ENCODE measurements at regions of chr1 and their contacts with region 1.

Region 1: GRCh38 chr1:193264313-193265065 is 78.1 kb upstream of the B3GALT2 start:
- DNase-seq: no peak
- ATAC-seq: no peak
- H3K4me3 ChIP-seq: no peak overlapping the region
- H3K27ac ChIP-seq: no peak overlapping the region
- H3K4me1 ChIP-seq: no peaks in the 10 kb centered on the region
- H3K27me3 ChIP-seq: no peaks in the 10 kb centered on the region
- CTCF ChIP-seq: no peak

Region 2: DNA sequence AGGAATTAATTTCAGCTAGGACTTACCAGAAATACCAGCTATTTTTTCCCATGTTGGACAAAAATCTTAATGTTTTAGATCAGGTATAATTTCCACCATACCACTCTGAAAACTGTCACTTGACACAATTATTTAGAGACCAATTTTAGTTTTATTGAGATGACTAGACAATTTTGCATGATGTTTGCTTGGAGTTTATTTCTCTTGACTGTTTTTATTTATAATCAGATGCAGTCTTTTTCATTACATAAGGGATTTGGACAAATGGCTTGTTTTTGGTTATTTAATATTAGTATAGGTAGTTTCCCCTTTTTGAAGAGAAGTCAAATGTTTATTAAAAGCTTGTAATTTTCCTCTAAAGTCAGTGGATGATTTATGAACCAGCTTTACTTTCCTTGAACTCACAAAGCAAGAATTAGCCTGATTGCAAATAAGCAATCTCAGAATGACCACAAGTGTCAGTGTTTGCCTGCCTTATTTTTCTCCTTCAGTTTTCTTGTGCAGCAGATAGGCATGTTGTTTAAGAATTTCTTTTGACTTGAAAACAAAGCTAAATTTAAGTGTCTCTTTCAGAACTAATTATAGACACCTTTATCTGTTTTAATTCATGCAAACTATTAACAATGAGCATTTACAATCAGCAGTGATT is 74.3 kb before region 1 on chr1:
- CTCF ChIA-PET with region 1: no interaction called
- POLR2A ChIA-PET with region 1: no interaction called
- in situ Hi-C with region 1: no loop called
- intact Hi-C with region 1: no loop called
- DNase-seq: no peak
- ATAC-seq: no peak
- H3K4me3 ChIP-seq: no peak overlapping the region
- H3K27ac ChIP-seq: no peak overlapping the region
- H3K4me1 ChIP-seq: peaks cover 14% of the 10 kb centered on the region
- H3K27me3 ChIP-seq: no peaks in the 10 kb centered on the region
- CTCF ChIP-seq: no peak; the same call in 1 of the 2 replicates

Region 3: GRCh38 chr1:193211539-193211938 is 53.0 kb before region 1 on chr1:
- CTCF ChIA-PET with region 1: no interaction called
- POLR2A ChIA-PET with region 1: no interaction called
- in situ Hi-C with region 1: no loop called
- intact Hi-C with region 1: no loop called
- DNase-seq: no peak
- ATAC-seq: no peak
- H3K4me3 ChIP-seq: no peak overlapping the region
- H3K27ac ChIP-seq: no peak overlapping the region
- H3K4me1 ChIP-seq: no peaks in the 10 kb centered on the region
- H3K27me3 ChIP-seq: no peaks in the 10 kb centered on the region
- CTCF ChIP-seq: no peak

Region 4: GRCh38 chr1:193283016-193283415 is 18.5 kb after region 1 on chr1:
- CTCF ChIA-PET with region 1: no interaction called
- POLR2A ChIA-PET with region 1: no interaction called
- in situ Hi-C with region 1: no loop called
- intact Hi-C with region 1: no loop called
- DNase-seq: no peak
- ATAC-seq: no peak
- H3K4me3 ChIP-seq: no peak overlapping the region
- H3K27ac ChIP-seq: no peak overlapping the region
- H3K4me1 ChIP-seq: no peaks in the 10 kb centered on the region
- H3K27me3 ChIP-seq: no peaks in the 10 kb centered on the region
- CTCF ChIP-seq: no peak

Region 5: DNA sequence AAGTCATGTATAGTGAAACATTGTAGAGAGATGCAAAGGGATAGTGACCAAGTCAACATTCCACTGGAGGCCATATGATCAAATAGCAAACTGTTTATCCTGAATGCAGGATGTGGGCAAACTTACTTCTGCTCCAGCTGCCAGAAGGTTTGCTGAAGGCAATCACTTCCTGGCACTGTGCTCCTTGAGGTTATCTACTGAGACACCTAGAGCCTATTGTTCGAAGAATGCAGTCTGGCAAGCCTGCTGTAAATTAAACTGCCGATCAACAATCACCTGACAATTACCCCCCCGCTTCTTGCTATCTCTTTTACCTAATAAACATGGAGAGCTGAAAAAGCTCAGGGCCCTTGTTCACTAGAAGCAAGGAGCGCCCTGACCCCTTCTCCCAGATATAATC is 61.3 kb after region 1 on chr1:
- CTCF ChIA-PET with region 1: interaction called, 11 read pairs
- POLR2A ChIA-PET with region 1: no interaction called
- in situ Hi-C with region 1: no loop called
- intact Hi-C with region 1: no loop called
- DNase-seq: no peak
- ATAC-seq: no peak
- H3K4me3 ChIP-seq: no peak overlapping the region
- H3K27ac ChIP-seq: no peak overlapping the region
- H3K4me1 ChIP-seq: no peaks in the 10 kb centered on the region
- H3K27me3 ChIP-seq: no peaks in the 10 kb centered on the region
- CTCF ChIP-seq: no peak

Measured in Panc1 (cell line).